ENCODE measurements at regions of chr18 and their contacts with region 1.

Region 1: GRCh38 chr18:5295981-5296705 is 617 bp upstream of the ZBTB14 start:
- DNase-seq: peak; percentile 81 to 97
- H3K4me3 ChIP-seq: peak overlapping the region; percentile 99 to 100
- H3K27ac ChIP-seq: peak overlapping the region; percentile 99
- H3K4me1 ChIP-seq: peaks cover 0 to 14% of the 10 kb centered on the region in 2 donors
- H3K27me3 ChIP-seq: no peaks in the 10 kb centered on the region
- CTCF ChIP-seq: no peak

Region 2: DNA sequence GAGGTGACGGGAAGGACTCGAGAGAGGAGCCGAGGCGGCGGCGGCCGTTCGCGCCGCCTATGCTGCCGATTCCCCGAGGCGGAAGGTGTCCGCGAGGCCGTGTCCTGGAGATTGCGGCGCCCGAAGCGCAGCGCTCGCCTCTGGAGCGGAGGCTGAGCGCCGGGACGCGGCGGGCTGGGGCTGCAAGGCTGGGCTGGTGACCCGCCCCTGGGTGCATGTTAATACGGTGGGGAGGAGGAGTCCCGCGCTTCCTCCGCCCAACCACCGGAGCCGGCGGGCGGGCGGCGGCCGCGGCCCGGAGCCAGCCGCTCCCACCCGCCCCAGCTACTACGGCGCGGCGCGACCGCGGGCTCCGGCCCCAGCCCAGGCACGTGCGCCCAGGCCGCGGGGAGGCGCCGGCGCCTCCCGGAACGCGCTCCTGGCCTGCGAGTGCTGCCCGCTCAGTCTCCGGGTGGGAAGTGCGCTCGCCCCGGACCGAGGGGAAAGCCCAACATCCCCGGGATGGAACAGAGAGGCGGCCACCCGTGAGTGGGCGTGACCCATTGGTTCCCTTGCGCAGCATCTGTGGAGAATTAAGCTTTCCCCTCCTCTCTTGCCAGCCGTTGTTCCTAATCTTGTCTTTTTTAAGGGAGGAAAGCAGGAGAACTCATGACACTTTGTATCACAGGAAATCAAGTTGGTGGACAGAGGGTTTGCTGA is 840.9 kb before region 1 on chr18 and contains the start of gene DLGAP1:
- intact Hi-C with region 1: loop called (anchors 10 kb)
- DNase-seq: peak in 1 of 2 donors; percentile 79
- H3K4me3 ChIP-seq: peak within 1 kb of the TSS; percentile 62 to 76
- H3K27ac ChIP-seq: peak within 1 kb of the TSS in 1 of 2 donors; percentile 53
- H3K4me1 ChIP-seq: peaks cover 0 to 5% of the 10 kb centered on the region in 2 donors
- H3K27me3 ChIP-seq: no peaks in the 10 kb centered on the region
- CTCF ChIP-seq: no peak
- total RNA-seq, gene DLGAP1: 2.0 TPM

Region 3: DNA sequence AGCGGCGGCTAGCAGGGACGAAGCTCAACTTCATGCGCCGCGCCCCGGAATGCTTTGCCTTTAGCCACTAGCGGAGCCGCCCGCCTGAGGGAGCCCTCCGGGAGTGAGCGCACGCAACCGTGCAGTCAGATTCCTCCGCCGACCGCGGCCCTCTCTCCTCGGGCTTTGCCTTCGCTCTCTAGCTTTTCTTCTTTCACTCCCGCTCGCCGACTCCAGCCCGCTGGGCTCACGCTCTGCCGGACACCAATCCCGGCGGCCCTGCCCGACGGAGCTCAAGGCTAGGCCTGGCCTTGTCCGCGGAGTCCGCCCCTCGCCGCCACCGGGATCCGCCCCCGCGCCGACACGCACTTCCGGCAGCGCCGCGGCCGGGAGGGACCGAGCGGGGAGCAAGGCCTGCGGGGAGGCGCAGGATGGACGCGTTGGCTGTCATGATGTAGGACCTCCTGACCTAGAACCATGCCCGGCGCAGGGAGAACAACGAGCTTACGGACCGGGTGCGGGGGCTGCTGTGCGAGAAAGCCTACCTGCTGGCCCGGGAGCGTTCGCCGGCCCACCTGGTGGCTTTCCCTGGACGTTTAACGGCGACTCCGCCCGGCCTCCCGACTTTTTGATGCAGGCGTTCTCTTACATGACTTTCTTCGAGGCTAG is 58.3 kb before region 1 on chr18:
- intact Hi-C with region 1: loop called (anchors 1 kb)
- DNase-seq: peak; percentile 30 to 92
- H3K4me3 ChIP-seq: peak overlapping the region; percentile 82 to 86
- H3K27ac ChIP-seq: peak overlapping the region; percentile 99 to 100
- H3K4me1 ChIP-seq: peaks cover 5 to 15% of the 10 kb centered on the region in 2 donors
- H3K27me3 ChIP-seq: no peaks in the 10 kb centered on the region
- CTCF ChIP-seq: peak in 1 of 3 experiments; percentile 36

Region 4: DNA sequence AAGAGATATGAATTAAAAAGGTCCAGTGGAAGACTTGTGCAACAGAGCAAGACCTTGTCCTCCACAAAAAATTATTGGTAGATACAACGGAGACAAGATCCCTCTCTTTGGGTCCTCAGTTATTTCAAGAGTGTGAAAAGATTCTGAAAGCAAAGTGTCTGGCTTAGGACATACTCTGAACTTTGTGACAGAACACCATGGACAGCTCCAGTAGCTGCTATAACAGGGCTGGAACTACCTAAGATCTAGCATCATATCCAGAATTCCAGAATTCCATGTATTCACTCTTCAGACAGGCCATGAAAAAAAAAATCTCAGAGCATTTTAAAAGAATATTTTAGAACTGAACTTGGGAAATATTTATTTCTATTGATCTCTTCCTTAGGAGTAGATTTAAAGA is 74.2 kb after region 1 on chr18:
- intact Hi-C with region 1: no loop called
- DNase-seq: no peak
- H3K4me3 ChIP-seq: no peak overlapping the region
- H3K27ac ChIP-seq: no peak overlapping the region
- H3K4me1 ChIP-seq: no peaks in the 10 kb centered on the region
- H3K27me3 ChIP-seq: no peaks in the 10 kb centered on the region
- CTCF ChIP-seq: no peak

Region 5: DNA sequence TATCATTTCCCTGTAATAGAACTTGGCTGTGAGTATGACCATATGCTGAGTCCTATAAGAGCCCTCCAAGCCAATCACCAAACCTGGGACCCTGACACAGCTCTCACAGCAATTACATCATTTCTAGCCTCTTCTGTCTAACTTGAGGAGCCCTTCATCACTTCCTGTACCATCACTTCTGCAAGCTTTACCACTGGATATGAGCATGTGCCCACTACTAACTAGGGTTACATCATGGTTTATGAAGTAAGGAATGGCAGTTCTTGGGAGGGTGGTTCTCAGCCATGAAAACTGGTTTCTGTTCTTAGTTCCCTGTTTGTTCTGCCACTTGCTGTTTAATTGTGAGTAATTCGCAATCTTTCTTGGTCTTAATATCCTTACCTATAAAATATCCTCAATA is 278.7 kb after region 1 on chr18:
- intact Hi-C with region 1: no loop called
- DNase-seq: no peak
- H3K4me3 ChIP-seq: no peak overlapping the region
- H3K27ac ChIP-seq: no peak overlapping the region
- H3K4me1 ChIP-seq: no peaks in the 10 kb centered on the region
- H3K27me3 ChIP-seq: no peaks in the 10 kb centered on the region
- CTCF ChIP-seq: no peak